Panc1 (cell line): ENCODE measurements at regions of chr6 and their contacts with region 1.

Region 1: GRCh38 chr6:21754891-21755290 is 161.3 kb downstream of the SOX4 start:
- DNase-seq: no peak
- ATAC-seq: peak; percentile 76
- H3K4me3 ChIP-seq: peak overlapping the region in 1 of 2 experiments; percentile 6; a peak in 1 of 4 replicates
- H3K27ac ChIP-seq: peak overlapping the region; percentile 100
- H3K4me1 ChIP-seq: peaks cover 63% of the 10 kb centered on the region
- H3K27me3 ChIP-seq: no peaks in the 10 kb centered on the region
- CTCF ChIP-seq: no peak

Region 2: GRCh38 chr6:21710908-21711627 is 43.8 kb before region 1 on chr6:
- CTCF ChIA-PET with region 1: no interaction called
- POLR2A ChIA-PET with region 1: no interaction called
- in situ Hi-C with region 1: no loop called
- intact Hi-C with region 1: no loop called
- DNase-seq: no peak
- ATAC-seq: no peak
- H3K4me3 ChIP-seq: no peak overlapping the region
- H3K27ac ChIP-seq: peak overlapping the region; percentile 51
- H3K4me1 ChIP-seq: peaks cover 11% of the 10 kb centered on the region; the same call in 1 of the 2 replicates
- H3K27me3 ChIP-seq: no peaks in the 10 kb centered on the region
- CTCF ChIP-seq: no peak

Region 3: GRCh38 chr6:21733311-21733710 is 21.6 kb before region 1 on chr6:
- CTCF ChIA-PET with region 1: no interaction called
- POLR2A ChIA-PET with region 1: no interaction called
- in situ Hi-C with region 1: no loop called
- intact Hi-C with region 1: no loop called
- DNase-seq: no peak
- ATAC-seq: no peak
- H3K4me3 ChIP-seq: no peak overlapping the region
- H3K27ac ChIP-seq: peak overlapping the region; percentile 72
- H3K4me1 ChIP-seq: peaks cover 35% of the 10 kb centered on the region
- H3K27me3 ChIP-seq: no peaks in the 10 kb centered on the region
- CTCF ChIP-seq: no peak

Region 4: DNA sequence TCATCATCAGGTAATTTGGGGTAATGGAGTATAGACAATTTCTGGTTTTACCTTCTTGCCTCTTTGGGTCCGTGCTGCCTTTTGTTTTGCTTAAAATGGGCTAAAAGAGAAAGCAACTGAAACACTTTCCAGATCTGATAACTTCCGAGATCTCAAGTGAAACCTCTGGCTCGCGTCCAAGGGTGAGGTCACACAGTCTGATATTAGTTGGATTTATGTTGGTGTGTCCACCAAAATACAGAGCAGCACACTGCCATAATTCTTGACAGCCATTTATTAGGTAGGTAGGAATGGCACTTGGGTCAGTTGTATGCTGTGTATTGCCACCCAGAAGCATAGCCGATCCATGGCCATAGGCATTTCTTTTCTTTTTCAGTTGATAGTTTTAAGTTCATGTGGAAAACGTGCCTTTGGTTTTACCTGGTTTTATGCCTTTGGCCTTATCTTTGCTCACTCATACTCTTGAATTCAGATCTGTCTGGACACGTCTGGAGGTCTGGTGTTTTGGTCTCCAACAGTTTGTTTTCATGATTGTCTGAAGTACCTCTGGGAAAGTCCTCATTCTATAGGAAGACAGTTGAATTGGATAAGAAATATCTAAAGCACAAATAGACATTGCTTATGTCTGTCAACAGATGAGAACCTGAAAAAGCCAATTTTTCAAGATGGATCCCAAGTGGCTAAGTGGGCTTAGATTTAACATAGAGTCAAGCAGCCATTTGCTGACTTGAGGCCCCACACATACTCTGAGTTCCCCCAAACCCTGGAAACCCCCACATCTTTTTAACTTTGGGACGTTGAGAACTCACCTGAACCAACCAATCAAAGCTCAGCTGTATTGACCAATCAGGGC is 159.5 kb after region 1 on chr6:
- CTCF ChIA-PET with region 1: no interaction called
- POLR2A ChIA-PET with region 1: no interaction called
- in situ Hi-C with region 1: no loop called
- intact Hi-C with region 1: loop called (anchors 10 kb)
- DNase-seq: no peak
- ATAC-seq: no peak
- H3K4me3 ChIP-seq: no peak overlapping the region
- H3K27ac ChIP-seq: peak overlapping the region; percentile 46; the same call in 1 of the 2 replicates
- H3K4me1 ChIP-seq: no peaks in the 10 kb centered on the region; the same call in 1 of the 2 replicates
- H3K27me3 ChIP-seq: no peaks in the 10 kb centered on the region
- CTCF ChIP-seq: no peak